ENCODE measurements at regions of chr3 and their contacts with region 1.

Region 1: GRCh38 chr3:196287440-196288148 is at the start of gene PCYT1A:
- DNase-seq: peak; percentile 96
- H3K4me3 ChIP-seq: peak within 1 kb of the TSS; percentile 69 to 94 (median 87)
- H3K27ac ChIP-seq: peak within 1 kb of the TSS; percentile 90
- H3K4me1 ChIP-seq: peaks cover 13% of the 10 kb centered on the region
- H3K27me3 ChIP-seq: no peaks in the 10 kb centered on the region
- CTCF ChIP-seq: no peak
- total RNA-seq, gene PCYT1A: 103 to 175 TPM

Region 2: DNA sequence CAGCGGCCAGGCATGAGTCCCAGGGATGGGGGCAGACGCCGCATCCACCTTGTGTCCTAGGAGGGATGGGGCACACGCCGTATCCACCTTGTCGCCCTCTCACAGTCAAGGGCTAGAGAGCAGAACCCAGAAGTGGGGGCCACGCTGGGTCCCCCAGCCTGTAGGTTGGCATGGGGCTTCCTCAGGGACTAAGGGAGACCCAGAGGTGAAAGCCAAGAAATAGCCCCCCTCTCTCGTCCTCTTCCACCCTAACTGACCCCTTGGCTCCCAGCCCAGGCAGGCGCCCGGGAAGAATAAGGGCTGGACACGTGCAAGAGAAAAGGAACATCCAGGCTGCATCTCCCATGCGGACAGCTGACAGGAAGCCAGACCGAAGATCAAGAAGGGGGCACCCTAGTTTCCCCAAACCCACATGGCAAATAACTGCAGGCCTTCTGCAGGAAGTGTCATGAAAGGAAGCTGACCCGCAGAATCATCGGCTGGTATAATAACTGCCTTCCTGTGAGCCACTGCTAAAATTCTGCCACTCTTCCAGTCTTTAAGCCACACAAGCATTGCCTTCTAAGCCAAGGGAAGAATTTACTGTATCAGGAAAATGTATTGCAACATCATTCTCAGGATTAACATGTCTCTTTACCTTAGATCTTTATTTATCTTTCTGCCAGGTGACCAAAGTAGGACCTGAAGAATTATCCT is 167.2 kb before region 1 on chr3:
- CTCF ChIA-PET with region 1: no interaction called
- dilution Hi-C with region 1: no loop called
- in situ Hi-C with region 1: no loop called
- intact Hi-C with region 1: no loop called
- DNase-seq: no peak
- H3K4me3 ChIP-seq: no peak overlapping the region
- H3K27ac ChIP-seq: no peak overlapping the region
- H3K4me1 ChIP-seq: no peaks in the 10 kb centered on the region
- H3K27me3 ChIP-seq: no peaks in the 10 kb centered on the region
- CTCF ChIP-seq: no peak

Region 3: DNA sequence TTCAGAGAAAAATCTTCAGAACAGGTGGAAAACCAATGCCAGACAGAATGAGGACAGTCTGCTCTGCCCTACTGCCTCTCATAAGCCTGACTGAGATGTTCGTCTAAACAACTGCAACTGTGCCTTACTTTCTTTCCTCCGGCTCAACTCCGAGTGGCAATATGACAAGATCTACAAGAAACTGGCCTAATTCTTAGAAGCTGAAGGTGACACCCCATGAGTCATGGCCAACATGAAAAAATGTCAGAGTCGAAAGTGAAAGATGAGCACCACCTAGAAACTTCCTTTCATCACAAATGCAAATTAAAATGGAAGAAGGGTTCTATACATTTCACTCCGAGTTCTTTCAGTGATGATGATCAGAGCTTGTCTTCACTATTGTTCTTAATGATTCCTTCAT is 13.0 kb before region 1 on chr3:
- CTCF ChIA-PET with region 1: no interaction called
- dilution Hi-C with region 1: no loop called
- in situ Hi-C with region 1: no loop called
- intact Hi-C with region 1: loop called (anchors 1 kb)
- DNase-seq: peak; percentile 46
- H3K4me3 ChIP-seq: no peak overlapping the region
- H3K27ac ChIP-seq: no peak overlapping the region
- H3K4me1 ChIP-seq: peaks cover 26% of the 10 kb centered on the region
- H3K27me3 ChIP-seq: no peaks in the 10 kb centered on the region
- CTCF ChIP-seq: no peak

Region 4: GRCh38 chr3:196317687-196318467 is 30.3 kb after region 1 on chr3 and contains the start of gene DYNLT2B:
- CTCF ChIA-PET with region 1: no interaction called
- dilution Hi-C with region 1: no loop called
- in situ Hi-C with region 1: no loop called
- intact Hi-C with region 1: loop called (anchors 1 kb)
- DNase-seq: peak; percentile 91
- H3K4me3 ChIP-seq: peak within 1 kb of the TSS; percentile 63 to 99 (median 87)
- H3K27ac ChIP-seq: peak within 1 kb of the TSS; percentile 79
- H3K4me1 ChIP-seq: peaks cover 28% of the 10 kb centered on the region
- H3K27me3 ChIP-seq: no peaks in the 10 kb centered on the region
- CTCF ChIP-seq: peak in 1 of 2 donors; percentile 9
- total RNA-seq, gene DYNLT2B: 10.3 to 17.3 TPM